ENCODE measurements at regions of chr14 and their contacts with region 1.

Region 1: GRCh38 chr14:100417466-100417865 is 94.3 kb downstream of the SLC25A47 start:
- DNase-seq: peak; percentile 85
- H3K4me3 Mint-ChIP-seq: no peak overlapping the region
- H3K27ac Mint-ChIP-seq: peak overlapping the region; percentile 30
- H3K4me1 Mint-ChIP-seq: peaks cover 21% of the 10 kb centered on the region
- H3K27me3 Mint-ChIP-seq: no peaks in the 10 kb centered on the region
- CTCF ChIP-seq: peak; percentile 70

Region 2: DNA sequence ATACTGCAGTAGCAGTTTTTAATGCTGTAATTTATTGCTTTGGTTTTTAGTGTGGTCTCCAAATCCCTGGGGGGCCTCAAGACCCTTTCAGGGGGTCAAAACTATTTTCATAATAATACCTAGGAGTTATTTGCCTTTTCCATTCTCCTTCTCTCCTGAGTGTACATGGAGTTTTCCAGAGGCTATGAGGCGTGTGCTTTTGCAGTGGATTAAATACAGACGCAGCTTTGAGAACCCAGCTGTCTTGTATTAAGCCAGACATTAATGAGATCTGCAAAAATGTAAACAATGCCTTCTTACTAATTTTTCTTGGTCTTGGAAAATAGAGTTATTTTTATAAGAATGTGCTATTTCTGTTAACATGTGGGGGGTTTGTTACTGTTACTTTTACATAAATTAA is 25.7 kb before region 1 on chr14:
- CTCF ChIA-PET with region 1: interaction called, 17 read pairs
- POLR2A ChIA-PET with region 1: interaction called, 4 read pairs
- intact Hi-C with region 1: no loop called
- DNase-seq: no peak
- H3K4me3 Mint-ChIP-seq: no peak overlapping the region
- H3K27ac Mint-ChIP-seq: no peak overlapping the region
- H3K4me1 Mint-ChIP-seq: peaks cover 22% of the 10 kb centered on the region
- H3K27me3 Mint-ChIP-seq: no peaks in the 10 kb centered on the region
- CTCF ChIP-seq: no peak

Region 3: DNA sequence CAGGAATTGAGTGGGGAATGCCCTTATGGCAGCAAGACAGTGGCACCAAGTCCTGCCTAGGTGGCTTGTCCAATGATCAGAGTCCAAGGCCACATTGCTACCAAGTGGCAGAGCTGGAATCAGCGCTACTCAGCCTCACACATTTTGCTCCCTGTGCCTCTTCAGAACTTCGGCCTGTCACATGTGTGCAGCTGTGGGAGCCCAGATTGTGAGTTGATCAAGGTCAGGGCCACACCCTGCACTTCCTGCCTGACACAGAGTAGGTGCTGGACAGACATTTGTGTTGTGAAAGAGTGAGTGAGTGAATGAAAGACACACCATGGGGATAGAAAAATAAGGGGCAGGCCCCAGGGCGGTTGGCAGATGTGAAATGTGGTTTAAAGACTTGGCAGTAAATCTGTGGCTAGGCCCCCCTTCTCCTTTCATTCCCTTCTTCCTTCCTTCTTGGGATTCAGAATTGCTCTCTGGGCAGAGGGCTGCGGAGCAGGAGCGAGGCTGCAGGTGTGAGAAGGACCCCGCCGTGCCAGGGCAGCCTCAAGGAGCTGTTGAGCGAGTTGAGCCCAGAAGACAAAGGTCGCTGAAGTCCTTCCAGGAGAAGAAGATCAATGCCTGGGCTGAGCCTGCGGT is 10.8 kb before region 1 on chr14:
- CTCF ChIA-PET with region 1: interaction called, 18 read pairs
- POLR2A ChIA-PET with region 1: interaction called, 6 read pairs
- intact Hi-C with region 1: no loop called
- DNase-seq: peak; percentile 81
- H3K4me3 Mint-ChIP-seq: no peak overlapping the region
- H3K27ac Mint-ChIP-seq: peak overlapping the region; percentile 79
- H3K4me1 Mint-ChIP-seq: peaks cover 40% of the 10 kb centered on the region
- H3K27me3 Mint-ChIP-seq: no peaks in the 10 kb centered on the region
- CTCF ChIP-seq: no peak

Region 4: GRCh38 chr14:100440187-100440631 is 22.7 kb after region 1 on chr14:
- CTCF ChIA-PET with region 1: interaction called, 10 read pairs
- POLR2A ChIA-PET with region 1: interaction called, 33 read pairs
- intact Hi-C with region 1: loop called (anchors 1 kb)
- DNase-seq: peak; percentile 89
- H3K4me3 Mint-ChIP-seq: peak overlapping the region; percentile 48
- H3K27ac Mint-ChIP-seq: peak overlapping the region; percentile 87
- H3K4me1 Mint-ChIP-seq: peaks cover 23% of the 10 kb centered on the region
- H3K27me3 Mint-ChIP-seq: no peaks in the 10 kb centered on the region
- CTCF ChIP-seq: peak; percentile 85

Region 5: GRCh38 chr14:100645192-100645990 is 227.9 kb after region 1 on chr14:
- CTCF ChIA-PET with region 1: interaction called, 38 read pairs
- POLR2A ChIA-PET with region 1: interaction called, 5 read pairs
- intact Hi-C with region 1: loop called (anchors 1 kb)
- DNase-seq: peak; percentile 90
- H3K4me3 Mint-ChIP-seq: no peak overlapping the region
- H3K27ac Mint-ChIP-seq: no peak overlapping the region
- H3K4me1 Mint-ChIP-seq: peaks cover 5% of the 10 kb centered on the region
- H3K27me3 Mint-ChIP-seq: no peaks in the 10 kb centered on the region
- CTCF ChIP-seq: peak; percentile 82

Measured in MCF 10A (cell line).